ENCODE measurements at regions of chr1 and their contacts with region 1.

Region 1: GRCh38 chr1:200279810-200280411 is 129.9 kb downstream of the ZNF281 start:
- DNase-seq: peak; percentile 76
- H3K4me3 Mint-ChIP-seq: no peak overlapping the region
- H3K27ac Mint-ChIP-seq: no peak overlapping the region
- H3K4me1 Mint-ChIP-seq: peaks cover 14% of the 10 kb centered on the region
- H3K27me3 Mint-ChIP-seq: no peaks in the 10 kb centered on the region
- CTCF ChIP-seq: peak; percentile 84

Region 2: DNA sequence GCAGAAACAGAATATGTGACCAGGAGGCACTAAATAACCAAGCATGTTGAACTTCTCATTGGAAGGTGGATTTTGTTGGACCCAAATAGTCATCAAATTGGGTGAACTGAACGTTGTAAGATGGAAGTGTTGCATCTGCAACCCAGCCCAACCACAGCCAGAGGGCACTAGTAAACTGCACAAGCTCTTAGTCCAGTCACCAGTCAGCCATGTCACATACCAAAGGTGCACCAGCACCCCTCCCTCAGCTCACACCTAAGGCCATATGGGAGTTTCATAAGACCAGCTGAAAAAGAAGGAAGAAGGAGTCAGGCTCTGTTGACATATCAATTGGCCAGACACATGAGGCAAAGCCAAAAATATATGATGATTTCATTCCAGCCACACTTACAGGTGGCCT is 734.1 kb before region 1 on chr1:
- CTCF ChIA-PET with region 1: interaction called, 6 read pairs
- intact Hi-C with region 1: loop called (anchors 1 kb)
- DNase-seq: peak; percentile 59
- H3K4me3 Mint-ChIP-seq: no peak overlapping the region
- H3K27ac Mint-ChIP-seq: no peak overlapping the region
- H3K4me1 Mint-ChIP-seq: peaks cover 8% of the 10 kb centered on the region
- H3K27me3 Mint-ChIP-seq: no peaks in the 10 kb centered on the region
- CTCF ChIP-seq: peak; percentile 16

Region 3: DNA sequence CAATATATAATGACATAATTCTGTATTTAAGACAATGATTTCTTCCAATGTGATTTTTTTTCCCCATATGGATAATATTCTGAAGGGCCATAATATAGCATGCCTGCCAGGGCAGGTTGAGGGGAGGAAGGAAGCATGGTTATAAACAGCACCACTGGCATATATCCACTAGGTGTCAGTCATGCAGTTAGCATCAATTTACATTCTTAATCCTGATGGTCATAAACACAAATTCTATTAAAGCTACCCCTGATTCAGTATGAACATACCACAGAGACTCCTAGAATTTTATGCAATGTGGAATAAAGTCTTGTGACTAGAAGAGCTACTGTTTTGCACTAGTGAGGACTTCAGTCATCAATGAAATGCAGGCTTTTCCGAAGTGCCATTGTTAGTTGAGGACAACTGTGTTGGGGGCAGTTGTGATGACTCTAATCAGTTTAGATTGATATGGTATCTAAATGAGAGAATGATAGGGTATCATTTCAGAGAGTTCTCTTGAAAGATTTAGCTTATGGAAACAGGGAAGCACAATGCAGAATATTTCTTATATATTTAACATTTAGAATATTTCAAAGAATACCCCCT is 595.1 kb before region 1 on chr1:
- CTCF ChIA-PET with region 1: interaction called, 19 read pairs
- intact Hi-C with region 1: loop called (anchors 1 kb)
- DNase-seq: peak; percentile 63
- H3K4me3 Mint-ChIP-seq: no peak overlapping the region
- H3K27ac Mint-ChIP-seq: no peak overlapping the region
- H3K4me1 Mint-ChIP-seq: peaks cover 41% of the 10 kb centered on the region
- H3K27me3 Mint-ChIP-seq: no peaks in the 10 kb centered on the region
- CTCF ChIP-seq: peak; percentile 71

Region 4: GRCh38 chr1:200139661-200140250 is 140.2 kb before region 1 on chr1:
- CTCF ChIA-PET with region 1: no interaction called
- intact Hi-C with region 1: loop called (anchors 1 kb)
- DNase-seq: peak; percentile 46
- H3K4me3 Mint-ChIP-seq: no peak overlapping the region
- H3K27ac Mint-ChIP-seq: no peak overlapping the region
- H3K4me1 Mint-ChIP-seq: no peaks in the 10 kb centered on the region
- H3K27me3 Mint-ChIP-seq: no peaks in the 10 kb centered on the region
- CTCF ChIP-seq: peak; percentile 69

Region 5: DNA sequence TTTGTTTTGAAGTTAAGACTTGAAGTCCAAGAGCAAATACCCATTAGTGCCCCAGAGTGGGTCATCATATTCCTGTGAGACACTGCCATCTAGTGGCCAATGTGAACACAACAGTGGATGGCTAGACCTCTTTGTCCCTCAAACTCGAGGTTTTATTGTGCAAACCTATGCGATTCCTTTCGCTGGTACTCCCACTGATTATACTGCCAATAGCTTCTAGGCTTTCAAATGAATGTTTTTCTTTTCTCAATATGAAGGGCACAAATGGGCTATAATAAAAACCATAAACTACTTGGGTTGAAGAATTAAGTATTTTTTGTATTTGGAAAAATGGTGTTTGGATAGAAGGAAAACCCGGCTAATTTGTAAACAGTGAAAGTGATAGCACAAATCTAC is 230.3 kb after region 1 on chr1:
- CTCF ChIA-PET with region 1: interaction called, 3 read pairs
- intact Hi-C with region 1: loop called (anchors 1 kb)
- DNase-seq: peak; percentile 81
- H3K4me3 Mint-ChIP-seq: no peak overlapping the region
- H3K27ac Mint-ChIP-seq: no peak overlapping the region
- H3K4me1 Mint-ChIP-seq: no peaks in the 10 kb centered on the region
- H3K27me3 Mint-ChIP-seq: peaks cover 17% of the 10 kb centered on the region
- CTCF ChIP-seq: peak; percentile 78